MCF 10A (cell line): ENCODE measurements at regions of chr1 and their contacts with region 1.

Region 1: DNA sequence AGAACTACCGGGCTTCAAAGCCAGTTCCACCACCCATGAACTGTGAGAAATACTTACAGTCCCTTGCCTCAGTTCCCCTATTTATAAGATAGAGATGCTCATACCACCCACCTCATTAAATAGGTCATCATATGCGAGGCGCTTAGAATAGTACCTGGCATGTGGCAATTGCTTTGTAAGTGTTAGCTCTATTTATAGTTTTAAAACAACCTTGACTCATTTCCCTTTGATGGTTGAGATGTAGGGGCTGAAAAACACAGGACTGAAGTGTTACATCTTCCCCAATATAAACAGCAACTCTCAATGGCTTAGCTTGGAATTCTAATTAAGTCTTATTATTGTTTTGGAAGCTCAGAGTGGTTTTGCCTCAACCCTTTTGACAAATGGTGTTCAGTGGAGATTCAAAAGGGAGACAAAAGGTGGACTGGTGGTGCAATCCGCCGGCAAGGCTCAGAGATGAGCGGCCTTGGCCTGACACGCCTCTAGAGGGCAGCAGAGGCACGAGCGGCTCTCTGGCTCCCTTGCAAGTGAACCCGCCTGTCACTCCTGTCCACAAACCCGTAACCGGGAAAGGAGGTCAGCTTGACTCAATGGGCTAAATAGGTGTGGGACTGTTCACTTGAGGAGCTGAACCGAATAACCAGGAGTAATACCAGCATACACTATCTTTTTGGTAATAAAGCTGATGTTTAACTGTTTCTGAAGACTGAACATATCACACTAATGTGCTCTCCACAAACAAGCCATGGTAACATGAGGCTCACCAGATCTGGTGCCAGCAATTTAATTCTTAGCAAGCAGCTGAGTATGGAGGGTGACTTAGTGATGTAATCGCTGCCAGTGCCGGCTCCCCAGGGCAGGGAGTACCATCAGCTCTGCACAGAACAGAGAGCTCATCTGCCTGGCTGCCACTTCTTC is 19.5 kb upstream of the SMYD2 start:
- DNase-seq: peak; percentile 93
- H3K4me3 Mint-ChIP-seq: no peak overlapping the region
- H3K27ac Mint-ChIP-seq: no peak overlapping the region
- H3K4me1 Mint-ChIP-seq: peaks cover 12% of the 10 kb centered on the region
- H3K27me3 Mint-ChIP-seq: peaks cover 61% of the 10 kb centered on the region
- CTCF ChIP-seq: peak; percentile 100

Region 2: GRCh38 chr1:213122514-213122929 is 1138.9 kb before region 1 on chr1:
- CTCF ChIA-PET with region 1: interaction called, 14 read pairs
- POLR2A ChIA-PET with region 1: no interaction called
- intact Hi-C with region 1: no loop called
- DNase-seq: peak; percentile 75
- H3K4me3 Mint-ChIP-seq: no peak overlapping the region
- H3K27ac Mint-ChIP-seq: peak overlapping the region; percentile 61
- H3K4me1 Mint-ChIP-seq: peaks cover 26% of the 10 kb centered on the region
- H3K27me3 Mint-ChIP-seq: no peaks in the 10 kb centered on the region
- CTCF ChIP-seq: peak; percentile 74

Region 3: DNA sequence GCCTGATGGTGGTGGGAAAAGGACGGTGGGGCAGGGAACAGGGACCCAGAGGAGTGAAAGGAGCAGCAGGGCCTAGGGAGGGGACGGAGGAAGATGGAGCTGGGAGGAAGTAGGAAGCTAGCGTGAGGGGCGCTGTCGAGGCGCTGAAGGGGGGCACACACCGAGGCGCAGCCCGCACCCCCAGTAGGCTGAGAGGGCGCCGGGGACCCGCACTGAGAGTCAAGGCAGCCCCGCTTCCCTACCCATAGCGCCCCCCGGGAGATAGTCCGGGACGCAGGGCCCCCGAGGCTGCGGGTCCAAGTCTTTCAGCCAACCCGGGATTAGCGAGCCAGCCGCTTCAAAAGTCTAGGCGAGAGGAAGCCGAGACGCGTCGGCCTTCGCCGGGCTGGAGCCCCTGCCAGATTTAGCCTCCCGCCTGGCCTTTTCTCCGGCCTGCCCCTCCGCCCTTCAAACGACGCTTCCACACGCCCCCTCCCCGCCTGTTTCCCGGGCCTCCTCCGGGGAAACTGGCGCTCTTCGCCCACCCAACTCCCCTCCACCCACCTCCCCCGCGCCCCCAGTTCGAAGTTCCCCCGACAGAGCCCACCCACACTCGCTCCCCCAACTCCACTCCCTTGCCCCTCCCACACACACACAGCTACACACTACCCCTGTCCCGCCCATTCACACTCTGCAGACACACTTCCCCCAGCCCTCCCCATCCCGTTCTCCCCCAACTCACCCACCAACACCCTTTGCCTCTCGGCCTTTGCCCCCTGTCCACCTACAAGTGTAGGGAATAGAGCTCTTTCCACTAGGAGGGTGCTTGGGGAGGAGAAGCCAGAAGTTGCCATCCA is 281.5 kb before region 1 on chr1:
- CTCF ChIA-PET with region 1: no interaction called
- POLR2A ChIA-PET with region 1: no interaction called
- intact Hi-C with region 1: no loop called
- DNase-seq: no peak
- H3K4me3 Mint-ChIP-seq: no peak overlapping the region
- H3K27ac Mint-ChIP-seq: no peak overlapping the region
- H3K4me1 Mint-ChIP-seq: no peaks in the 10 kb centered on the region
- H3K27me3 Mint-ChIP-seq: peaks cover 84% of the 10 kb centered on the region
- CTCF ChIP-seq: no peak

Region 4: GRCh38 chr1:214213136-214213535 is 48.3 kb before region 1 on chr1:
- CTCF ChIA-PET with region 1: interaction called, 176 read pairs
- POLR2A ChIA-PET with region 1: interaction called, 19 read pairs
- intact Hi-C with region 1: loop called (anchors 1 kb)
- DNase-seq: peak; percentile 82
- H3K4me3 Mint-ChIP-seq: peak overlapping the region; percentile 15
- H3K27ac Mint-ChIP-seq: peak overlapping the region; percentile 7
- H3K4me1 Mint-ChIP-seq: peaks cover 20% of the 10 kb centered on the region
- H3K27me3 Mint-ChIP-seq: no peaks in the 10 kb centered on the region
- CTCF ChIP-seq: peak; percentile 25

Region 5: GRCh38 chr1:214248311-214249085 is 13.0 kb before region 1 on chr1:
- CTCF ChIA-PET with region 1: interaction called, 133 read pairs
- POLR2A ChIA-PET with region 1: interaction called, 3 read pairs
- intact Hi-C with region 1: no loop called
- DNase-seq: no peak
- H3K4me3 Mint-ChIP-seq: no peak overlapping the region
- H3K27ac Mint-ChIP-seq: no peak overlapping the region
- H3K4me1 Mint-ChIP-seq: peaks cover 6% of the 10 kb centered on the region
- H3K27me3 Mint-ChIP-seq: peaks cover 48% of the 10 kb centered on the region
- CTCF ChIP-seq: no peak

Region 6: DNA sequence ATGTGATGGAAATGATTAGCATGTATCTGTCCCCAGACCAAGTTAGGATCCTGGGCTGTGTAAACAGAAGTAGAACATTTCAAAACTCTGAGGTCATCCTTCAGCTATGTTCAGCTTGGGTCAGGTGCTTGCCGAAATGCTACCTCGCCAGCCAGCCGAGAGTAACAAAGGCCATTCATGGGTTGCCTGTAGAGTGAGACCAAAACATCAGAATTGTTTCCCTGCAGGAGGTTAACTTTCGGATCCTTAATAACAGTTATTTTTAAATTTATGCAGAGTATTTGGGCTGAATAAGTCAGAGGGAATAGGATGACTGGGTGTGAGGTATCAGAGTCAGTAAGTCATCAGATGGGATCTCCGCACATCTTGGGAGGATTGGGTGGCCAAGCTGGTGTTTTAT is 55.1 kb after region 1 on chr1:
- CTCF ChIA-PET with region 1: interaction called, 280 read pairs
- POLR2A ChIA-PET with region 1: interaction called, 4 read pairs
- intact Hi-C with region 1: loop called (anchors 2 kb)
- DNase-seq: peak; percentile 38
- H3K4me3 Mint-ChIP-seq: no peak overlapping the region
- H3K27ac Mint-ChIP-seq: no peak overlapping the region
- H3K4me1 Mint-ChIP-seq: no peaks in the 10 kb centered on the region
- H3K27me3 Mint-ChIP-seq: no peaks in the 10 kb centered on the region
- CTCF ChIP-seq: no peak

Region 7: GRCh38 chr1:214372092-214372491 is 110.6 kb after region 1 on chr1:
- CTCF ChIA-PET with region 1: interaction called, 12 read pairs
- POLR2A ChIA-PET with region 1: no interaction called
- intact Hi-C with region 1: no loop called
- DNase-seq: no peak
- H3K4me3 Mint-ChIP-seq: no peak overlapping the region
- H3K27ac Mint-ChIP-seq: peak overlapping the region; percentile 11
- H3K4me1 Mint-ChIP-seq: peaks cover 6% of the 10 kb centered on the region
- H3K27me3 Mint-ChIP-seq: no peaks in the 10 kb centered on the region
- CTCF ChIP-seq: no peak

Region 8: DNA sequence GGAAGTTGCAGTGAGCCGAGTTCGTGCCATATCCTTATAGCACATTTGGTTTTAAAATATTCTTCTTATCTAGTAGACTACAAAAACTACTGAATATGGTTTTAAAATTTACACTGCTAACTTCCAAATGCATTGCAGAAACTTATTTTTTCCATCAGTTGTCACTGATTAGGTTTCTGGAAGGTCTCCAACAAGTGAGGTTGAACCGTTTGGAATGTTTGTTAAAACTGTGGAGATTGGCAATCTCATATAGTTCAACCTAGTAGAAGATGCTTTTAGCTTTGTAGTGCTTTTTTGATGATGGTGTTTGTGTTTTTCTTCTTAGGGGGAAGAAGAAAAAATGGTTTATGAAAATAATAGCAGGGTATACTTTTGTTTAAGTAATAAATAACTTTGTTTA is 354.4 kb after region 1 on chr1:
- CTCF ChIA-PET with region 1: interaction called, 11 read pairs
- POLR2A ChIA-PET with region 1: no interaction called
- intact Hi-C with region 1: no loop called
- DNase-seq: no peak
- H3K4me3 Mint-ChIP-seq: no peak overlapping the region
- H3K27ac Mint-ChIP-seq: peak overlapping the region; percentile 84
- H3K4me1 Mint-ChIP-seq: peaks cover 38% of the 10 kb centered on the region
- H3K27me3 Mint-ChIP-seq: no peaks in the 10 kb centered on the region
- CTCF ChIP-seq: no peak